Left colon (tissue), 2 donors: ENCODE measurements at regions of chr3 and their contacts with region 1.

Region 1: GRCh38 chr3:66253790-66254620 is 33.2 kb downstream of the SLC25A26 start:
- DNase-seq: no peak
- ATAC-seq: peak; percentile 87

Region 2: GRCh38 chr3:66322436-66322835 is 68.4 kb after region 1 on chr3:
- intact Hi-C with region 1: no loop called
- DNase-seq: no peak
- ATAC-seq: no peak

Region 3: GRCh38 chr3:66822186-66823008 is 568.4 kb after region 1 on chr3:
- intact Hi-C with region 1: loop called in 1 of 2 experiments (anchors 10 kb)
- DNase-seq: peak; percentile 61 to 73
- ATAC-seq: peak; percentile 90